ENCODE measurements at regions of chr2 and their contacts with region 1.

Region 1: DNA sequence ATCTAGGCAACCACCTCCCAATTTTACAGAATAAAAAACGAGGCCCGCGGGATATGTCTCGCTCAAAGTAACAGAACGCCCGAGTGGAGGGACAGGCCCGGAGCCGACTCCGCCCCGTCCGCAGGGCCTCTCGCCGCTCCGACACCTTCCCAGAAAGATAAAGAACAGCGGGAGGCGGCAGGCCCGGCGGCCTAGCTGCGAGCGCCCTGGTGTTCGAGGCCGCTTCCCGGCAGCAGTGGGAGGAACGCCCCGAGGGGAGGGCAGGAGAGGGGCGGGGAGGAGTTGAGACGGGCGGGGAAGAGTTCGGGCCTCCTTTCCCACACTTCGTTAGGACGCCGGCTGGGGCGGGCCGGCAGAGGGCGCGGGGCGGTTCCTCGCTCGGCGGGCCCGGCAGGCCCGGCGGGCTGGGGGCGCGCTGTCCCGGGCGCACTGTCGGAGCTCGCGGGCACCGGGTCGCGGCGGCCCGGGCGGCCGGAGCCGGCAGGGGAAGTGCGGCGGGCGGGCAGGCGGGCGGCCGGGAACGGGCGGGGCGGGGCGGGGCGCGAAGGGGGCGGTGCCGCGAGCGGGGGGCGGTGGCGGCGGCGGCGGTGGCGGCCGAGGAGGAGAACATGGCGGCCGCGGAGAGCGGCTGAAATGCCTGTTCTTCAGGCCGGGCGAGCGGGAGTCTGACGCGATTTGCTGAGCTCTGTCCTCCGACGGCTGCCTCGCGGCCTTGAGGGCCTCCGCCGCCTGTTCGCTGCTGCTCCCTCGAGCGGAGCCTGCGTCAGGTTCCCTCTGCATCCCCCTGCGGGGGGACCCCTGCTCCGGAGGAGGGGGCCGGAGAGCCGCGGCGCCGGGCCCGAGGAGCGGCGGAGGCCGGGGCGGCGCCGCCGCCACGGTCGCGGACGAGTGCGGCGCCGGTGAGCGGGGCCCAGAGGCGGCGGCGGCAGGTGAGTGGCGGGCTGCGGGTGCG is at the start of gene NCOA1:
- DNase-seq: peak; percentile 97
- H3K4me3 ChIP-seq: peak within 1 kb of the TSS; percentile 83 to 97 (median 86)
- H3K27ac ChIP-seq: peak within 1 kb of the TSS; percentile 92 to 93 (median 92)
- H3K4me1 ChIP-seq: peaks cover 11 to 50% (median 45%) of the 10 kb centered on the region in 4 donors
- H3K27me3 ChIP-seq: no peaks in the 10 kb centered on the region
- CTCF ChIP-seq: peak; percentile 8 to 23 (median 13)
- EP300 ChIP-seq: no peak
- POLR2A ChIP-seq: no peak
- total RNA-seq, gene NCOA1: 43.9 to 49.4 (median 47.3) TPM

Region 2: DNA sequence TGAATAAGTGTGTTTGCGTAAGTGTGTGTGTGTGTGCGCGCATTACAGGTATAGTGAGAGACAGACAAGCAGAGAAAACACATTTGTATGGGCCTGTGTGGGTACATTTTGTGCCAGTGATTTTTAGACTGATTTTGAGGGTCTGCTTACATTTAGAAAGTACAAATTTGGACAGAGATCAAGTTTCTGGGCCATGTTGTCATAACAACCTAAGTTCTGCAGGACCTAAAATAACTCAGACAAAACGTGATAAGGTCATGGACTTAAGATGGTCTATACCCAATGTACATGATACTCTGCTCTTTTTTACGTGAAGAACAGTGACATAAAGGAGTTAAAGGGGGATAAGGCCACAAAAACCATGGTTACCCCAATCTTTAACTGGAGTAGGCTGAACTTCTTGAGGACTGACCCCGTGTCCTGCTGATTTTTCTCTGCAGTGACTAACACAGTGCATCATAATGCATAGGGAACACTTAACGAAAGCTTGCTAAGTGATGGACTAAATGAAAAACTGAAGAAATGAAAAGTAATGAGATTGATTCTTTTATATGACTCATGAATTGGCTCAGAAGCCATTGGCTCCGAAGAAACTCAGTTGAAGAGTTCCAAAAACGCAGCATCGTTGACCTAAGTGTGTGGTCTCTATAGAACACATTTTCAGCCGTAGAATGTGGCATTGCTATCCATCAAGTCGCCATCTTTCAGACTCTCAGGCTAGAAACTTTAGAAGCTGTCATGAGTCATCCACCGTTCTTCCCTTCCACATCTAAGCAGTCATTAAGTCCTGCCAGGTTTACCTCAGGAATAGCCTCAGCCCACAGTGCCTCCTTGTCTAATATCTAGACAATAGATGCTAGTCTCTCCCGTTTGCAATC is 61.5 kb before region 1 on chr2:
- intact Hi-C with region 1: loop called (anchors 5 kb)
- DNase-seq: no peak
- H3K4me3 ChIP-seq: no peak overlapping the region
- H3K27ac ChIP-seq: no peak overlapping the region
- H3K4me1 ChIP-seq: peaks cover 3 to 24% (median 24%) of the 10 kb centered on the region in 4 donors
- H3K27me3 ChIP-seq: no peaks in the 10 kb centered on the region
- CTCF ChIP-seq: no peak
- EP300 ChIP-seq: no peak
- POLR2A ChIP-seq: no peak

Region 3: DNA sequence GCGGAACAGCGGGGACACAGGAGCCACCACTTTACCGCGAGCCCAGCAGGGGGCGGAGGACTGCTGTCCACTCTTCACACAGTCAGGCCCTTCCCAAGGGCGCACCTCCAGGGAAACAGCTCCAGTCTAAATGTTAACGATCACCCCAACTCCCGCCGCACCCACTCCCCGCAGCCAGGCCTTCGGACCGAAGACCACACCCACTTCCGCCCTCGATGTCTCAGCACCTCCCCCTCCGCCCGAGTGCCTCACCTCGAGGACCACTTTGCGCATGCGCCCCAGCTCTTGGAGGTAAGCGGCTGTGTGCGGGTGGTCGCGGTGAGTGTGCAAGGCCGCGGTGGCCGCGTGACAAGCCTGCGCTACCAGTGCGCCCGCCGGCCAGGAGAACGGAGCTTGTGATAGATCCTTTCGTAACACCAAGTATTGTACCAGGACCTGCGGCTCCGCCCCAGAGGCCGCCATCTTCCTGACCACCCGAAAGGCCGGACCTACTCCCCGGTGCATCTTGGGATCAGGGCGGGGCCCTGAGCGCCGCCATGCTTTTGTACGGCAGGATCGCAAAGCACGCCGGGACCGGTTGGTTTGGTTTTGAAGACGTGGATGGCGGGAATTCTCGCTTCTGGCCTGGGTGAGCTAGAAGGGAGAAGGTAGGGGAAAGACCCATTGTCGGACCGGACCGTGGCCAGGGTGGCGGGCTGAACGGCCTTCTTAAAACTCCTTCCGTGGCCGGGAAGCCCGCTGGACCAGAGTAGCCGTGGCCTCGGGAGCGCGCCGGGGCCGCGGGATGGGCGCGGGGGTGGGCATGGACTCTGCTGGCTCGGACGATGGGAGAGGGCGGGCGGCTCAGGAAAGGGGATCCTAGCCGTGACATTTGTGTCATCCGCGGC is 302.2 kb after region 1 on chr2 and contains the starts of genes CENPO and PTRHD1:
- intact Hi-C with region 1: loop called (anchors 5 kb)
- DNase-seq: peak; percentile 98
- H3K4me3 ChIP-seq: peak within 1 kb of the TSS; percentile 75 to 96 (median 88)
- H3K27ac ChIP-seq: peak within 1 kb of the TSS; percentile 95 to 99 (median 98)
- H3K4me1 ChIP-seq: peaks cover 12 to 31% (median 24%) of the 10 kb centered on the region in 4 donors
- H3K27me3 ChIP-seq: no peaks in the 10 kb centered on the region
- CTCF ChIP-seq: peak; percentile 54 to 61 (median 59)
- EP300 ChIP-seq: no peak
- POLR2A ChIP-seq: no peak
- total RNA-seq, gene CENPO: 1.2 to 2.7 (median 1.4) TPM
- total RNA-seq, gene PTRHD1: 8.1 to 20.4 (median 15.6) TPM

Measured in esophagus muscularis mucosa (tissue), 4 donors.